Activated naive CD4-positive, alpha-beta T cell treated with anti-CD3 and anti-CD28 coated beads for 36 hours (primary cell): ENCODE measurements at regions of chr11 and their contacts with region 1.

Region 1: DNA sequence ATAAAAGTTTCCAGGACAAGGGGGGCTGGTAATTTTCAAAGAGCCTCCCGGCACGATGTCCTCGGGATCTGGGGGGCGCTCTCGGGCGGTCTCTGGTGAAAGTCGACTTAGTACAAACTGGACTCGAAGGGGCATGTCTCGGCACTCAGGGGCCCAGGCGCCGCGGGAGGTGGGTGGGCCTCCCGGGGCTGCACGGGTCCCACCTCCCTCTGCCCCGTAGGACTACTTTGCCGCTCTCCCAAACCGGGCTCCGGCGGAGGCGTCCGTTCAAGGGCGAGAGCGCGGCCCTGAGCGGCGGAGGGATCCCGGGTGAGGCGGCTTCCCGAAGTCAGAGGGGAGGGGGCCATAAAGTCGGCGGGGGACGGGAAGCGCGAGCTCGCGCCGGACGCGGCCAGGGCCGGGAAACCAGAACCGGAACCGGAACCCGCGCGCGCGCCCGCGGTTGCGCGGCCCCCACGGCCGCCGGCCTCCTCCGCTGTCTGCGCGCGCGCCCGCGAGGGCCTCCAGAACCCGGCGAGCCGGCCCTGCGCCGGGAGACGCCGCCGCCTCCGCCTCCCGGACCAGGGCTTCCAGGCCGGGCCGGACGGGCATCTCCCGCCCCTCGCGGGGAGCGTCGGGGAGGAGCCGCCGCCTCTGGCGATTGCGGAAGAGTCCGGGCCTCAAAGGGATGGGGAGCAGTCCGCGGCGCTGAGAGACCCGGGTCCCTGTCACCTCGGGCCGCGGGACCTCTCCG is at the start of gene ARHGEF12:
- DNase-seq: peak; percentile 87
- H3K4me3 Mint-ChIP-seq: peak within 1 kb of the TSS; percentile 87
- H3K27ac Mint-ChIP-seq: peak within 1 kb of the TSS; percentile 57
- H3K4me1 Mint-ChIP-seq: peaks cover 34% of the 10 kb centered on the region
- H3K27me3 Mint-ChIP-seq: peaks cover 50% of the 10 kb centered on the region
- total RNA-seq, gene ARHGEF12: 15.4 to 16.5 TPM

Region 2: DNA sequence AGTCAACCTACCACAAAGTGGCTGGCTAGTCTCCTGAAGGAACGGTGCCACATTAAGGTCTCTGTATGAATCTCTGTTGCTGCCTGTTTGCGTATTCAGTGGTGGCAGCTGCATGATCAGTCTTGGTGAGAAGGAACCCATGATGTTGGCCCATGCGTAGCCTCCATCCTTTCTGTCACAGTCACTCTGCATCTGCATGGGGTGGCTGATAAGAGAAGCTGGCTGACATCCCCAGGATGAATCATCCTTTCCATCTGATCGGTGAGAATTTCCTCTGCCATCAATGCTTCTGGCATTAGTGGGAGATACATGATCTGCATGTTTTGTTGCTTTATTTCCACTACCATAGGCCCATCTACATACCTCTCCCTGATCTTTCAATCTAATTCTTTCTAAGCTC is 408.0 kb before region 1 on chr11:
- CTCF ChIA-PET with region 1: no interaction called
- intact Hi-C with region 1: no loop called
- DNase-seq: no peak
- H3K4me3 Mint-ChIP-seq: no peak overlapping the region
- H3K27ac Mint-ChIP-seq: no peak overlapping the region
- H3K4me1 Mint-ChIP-seq: no peaks in the 10 kb centered on the region
- H3K27me3 Mint-ChIP-seq: peaks cover 11% of the 10 kb centered on the region

Region 3: DNA sequence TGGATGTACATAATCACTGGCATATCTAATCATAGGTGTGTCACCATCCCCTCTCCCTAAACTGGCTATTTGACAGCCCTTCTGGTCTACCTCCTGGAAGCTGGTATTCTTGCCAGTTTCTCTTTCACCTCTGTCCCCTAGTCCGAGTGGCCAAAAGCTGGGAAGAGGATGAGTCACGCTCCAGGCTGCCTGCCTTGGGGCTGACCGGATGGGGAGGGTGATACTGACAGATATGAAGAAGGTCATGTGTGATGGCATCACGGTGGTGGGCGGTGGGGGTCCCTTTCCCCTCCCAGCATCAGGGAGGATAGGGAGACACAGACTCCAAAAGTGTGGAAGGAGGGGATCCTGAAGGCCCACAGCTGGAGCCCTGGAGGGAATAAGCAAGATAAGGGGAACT is 120.4 kb before region 1 on chr11:
- CTCF ChIA-PET with region 1: no interaction called
- intact Hi-C with region 1: no loop called
- DNase-seq: no peak
- H3K4me3 Mint-ChIP-seq: no peak overlapping the region
- H3K27ac Mint-ChIP-seq: no peak overlapping the region
- H3K4me1 Mint-ChIP-seq: peaks cover 5% of the 10 kb centered on the region
- H3K27me3 Mint-ChIP-seq: no peaks in the 10 kb centered on the region

Region 4: DNA sequence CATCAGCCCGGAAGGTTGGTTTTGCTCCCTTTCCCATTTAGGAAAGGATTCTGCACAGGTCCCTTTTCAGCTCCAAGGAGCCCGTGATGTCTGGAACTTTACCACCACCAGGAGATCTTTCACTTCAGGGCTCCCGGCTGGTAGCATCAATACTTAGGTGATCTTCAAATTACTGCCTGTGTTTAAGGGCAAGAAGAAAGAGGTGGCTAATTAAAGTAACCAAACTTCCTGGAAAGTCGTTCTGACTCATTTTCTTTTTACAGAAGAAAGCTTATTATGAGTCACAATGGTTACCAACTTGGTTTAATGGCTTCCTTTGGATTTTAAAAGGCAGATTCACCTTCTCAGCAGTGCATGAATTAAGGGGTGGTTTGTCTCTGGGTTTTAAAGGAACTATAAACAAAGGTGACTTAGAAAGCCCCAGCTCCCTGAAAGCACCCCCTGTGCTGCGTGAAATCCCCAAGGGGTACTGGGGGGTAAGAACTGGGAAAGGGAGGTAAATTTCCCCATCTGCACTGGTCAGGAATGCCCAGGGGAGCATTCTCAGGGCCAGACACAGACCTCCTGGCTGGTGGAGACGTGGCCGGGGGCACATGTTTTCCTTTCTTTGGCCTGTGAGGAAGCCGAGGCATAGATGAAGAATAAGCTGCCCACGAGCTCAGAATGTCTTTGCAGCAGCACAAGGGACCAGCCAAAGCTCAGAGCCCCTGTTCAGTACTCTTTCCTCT is 87.4 kb before region 1 on chr11:
- CTCF ChIA-PET with region 1: no interaction called
- intact Hi-C with region 1: loop called (anchors 2 kb)
- DNase-seq: peak; percentile 42
- H3K4me3 Mint-ChIP-seq: no peak overlapping the region
- H3K27ac Mint-ChIP-seq: peak overlapping the region; percentile 78
- H3K4me1 Mint-ChIP-seq: peaks cover 42% of the 10 kb centered on the region
- H3K27me3 Mint-ChIP-seq: peaks cover 64% of the 10 kb centered on the region

Region 5: GRCh38 chr11:120432056-120433018 is 96.3 kb after region 1 on chr11:
- CTCF ChIA-PET with region 1: no interaction called
- intact Hi-C with region 1: loop called (anchors 2 kb)
- DNase-seq: peak; percentile 30
- H3K4me3 Mint-ChIP-seq: no peak overlapping the region
- H3K27ac Mint-ChIP-seq: peak overlapping the region; percentile 57
- H3K4me1 Mint-ChIP-seq: peaks cover 17% of the 10 kb centered on the region
- H3K27me3 Mint-ChIP-seq: no peaks in the 10 kb centered on the region

Region 6: GRCh38 chr11:120682866-120683265 is 346.8 kb after region 1 on chr11:
- CTCF ChIA-PET with region 1: interaction called, 3 read pairs
- intact Hi-C with region 1: loop called (anchors 1 kb)
- DNase-seq: no peak
- H3K4me3 Mint-ChIP-seq: no peak overlapping the region
- H3K27ac Mint-ChIP-seq: no peak overlapping the region
- H3K4me1 Mint-ChIP-seq: no peaks in the 10 kb centered on the region
- H3K27me3 Mint-ChIP-seq: peaks cover 18% of the 10 kb centered on the region

Region 7: DNA sequence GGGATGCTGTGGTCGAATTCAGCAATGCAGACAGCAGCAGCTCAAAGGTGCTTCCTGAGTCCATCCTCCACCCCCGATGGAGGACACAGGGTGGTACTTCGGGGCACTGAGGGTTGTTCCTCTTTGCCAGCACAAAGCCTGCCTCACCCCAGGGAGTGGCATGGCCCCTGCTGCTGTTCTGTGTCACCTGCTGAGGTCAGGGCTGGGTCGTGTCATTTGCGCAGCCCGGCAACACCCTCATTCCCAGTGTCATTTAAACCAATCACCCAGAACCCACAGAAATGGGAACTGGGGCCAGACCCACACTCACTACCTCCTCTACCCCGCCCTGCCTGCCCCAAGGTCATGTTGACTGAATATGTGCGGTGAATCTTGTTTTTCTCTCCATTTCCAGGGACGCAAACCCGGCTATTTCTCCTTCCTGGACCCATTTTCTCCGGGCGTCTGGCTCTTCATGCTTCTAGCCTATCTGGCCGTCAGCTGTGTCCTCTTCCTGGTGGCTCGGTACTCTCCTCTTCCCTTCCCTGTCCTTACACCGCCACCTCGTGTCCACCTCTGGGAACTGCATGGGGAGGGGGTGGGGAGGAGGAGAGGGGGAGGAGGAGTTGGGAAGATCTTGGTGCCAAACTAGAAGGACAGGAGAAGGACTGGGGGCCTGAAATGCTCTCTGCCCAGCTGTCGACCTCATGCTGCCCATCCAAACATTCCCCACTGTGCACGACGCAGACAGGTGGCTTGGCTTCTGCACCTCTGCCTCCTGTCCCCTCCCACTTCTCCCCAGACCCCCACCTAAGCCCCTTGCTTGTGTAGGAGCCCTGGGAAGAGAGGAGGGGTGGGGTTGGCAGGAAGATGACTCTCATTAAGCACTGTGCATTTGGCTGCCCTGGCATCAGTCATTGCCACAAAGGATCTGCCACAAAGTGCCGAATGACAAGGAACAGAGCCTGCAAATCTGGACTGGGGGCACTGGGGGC is 616.7 kb after region 1 on chr11:
- CTCF ChIA-PET with region 1: no interaction called
- intact Hi-C with region 1: loop called (anchors 5 kb)
- DNase-seq: peak; percentile 84
- H3K4me3 Mint-ChIP-seq: peak overlapping the region; percentile 48
- H3K27ac Mint-ChIP-seq: peak overlapping the region; percentile 37
- H3K4me1 Mint-ChIP-seq: peaks cover 18% of the 10 kb centered on the region
- H3K27me3 Mint-ChIP-seq: peaks cover 19% of the 10 kb centered on the region